T-cell (primary cell): ENCODE measurements at regions of chr2 and their contacts with region 1.

Region 1: GRCh38 chr2:34379586-34379985 is 780.5 kb upstream of the FAM98A start:
- DNase-seq: no peak
- ATAC-seq: no peak
- H3K4me3 ChIP-seq: no peak overlapping the region
- H3K4me3 Mint-ChIP-seq: no peak overlapping the region
- H3K27ac ChIP-seq: no peak overlapping the region
- H3K27ac Mint-ChIP-seq: no peak overlapping the region
- H3K4me1 ChIP-seq: no peaks in the 10 kb centered on the region
- H3K4me1 Mint-ChIP-seq: no peaks in the 10 kb centered on the region
- H3K27me3 ChIP-seq: no peaks in the 10 kb centered on the region
- H3K27me3 Mint-ChIP-seq: no peaks in the 10 kb centered on the region

Region 2: DNA sequence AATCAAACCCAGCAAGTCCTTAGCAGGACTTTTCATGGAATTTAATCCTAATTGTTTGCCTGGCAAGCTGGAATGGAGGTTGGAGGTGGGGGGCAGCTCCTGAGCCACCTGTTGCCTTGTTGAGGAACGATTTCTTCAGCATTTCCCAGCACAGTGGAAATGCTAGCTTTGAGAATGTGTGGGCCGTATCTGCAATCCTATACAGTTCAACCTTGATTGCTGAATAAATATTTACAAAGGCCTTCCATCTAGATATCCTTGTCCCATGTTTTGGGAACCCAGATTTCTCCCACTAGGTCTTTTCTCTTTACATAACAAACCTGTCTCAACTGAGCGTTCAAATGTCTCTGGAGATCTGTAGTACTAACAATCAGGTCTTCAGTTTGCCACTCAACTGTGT is 55.4 kb after region 1 on chr2:
- CTCF ChIA-PET with region 1: interaction called in 1 of 2 experiments, 10 read pairs
- POLR2A ChIA-PET with region 1: no interaction called
- DNase-seq: no peak
- ATAC-seq: no peak
- H3K4me3 ChIP-seq: no peak overlapping the region
- H3K4me3 Mint-ChIP-seq: no peak overlapping the region
- H3K27ac ChIP-seq: no peak overlapping the region
- H3K27ac Mint-ChIP-seq: no peak overlapping the region
- H3K4me1 ChIP-seq: no peaks in the 10 kb centered on the region
- H3K4me1 Mint-ChIP-seq: no peaks in the 10 kb centered on the region
- H3K27me3 ChIP-seq: no peaks in the 10 kb centered on the region
- H3K27me3 Mint-ChIP-seq: no peaks in the 10 kb centered on the region